Transverse colon (tissue), 4 donors: ENCODE measurements at regions of chr3 and their contacts with region 1.

Region 1: GRCh38 chr3:120742198-120742849 is at the starts of genes GTF2E1 and RABL3:
- DNase-seq: peak; percentile 98
- H3K4me3 ChIP-seq: peak within 1 kb of the TSS; percentile 71 to 91 (median 83)
- H3K27ac ChIP-seq: peak within 1 kb of the TSS; percentile 90 to 98 (median 94)
- H3K4me1 ChIP-seq: peaks cover 11 to 20% (median 17%) of the 10 kb centered on the region in 4 donors
- H3K27me3 ChIP-seq: no peaks in the 10 kb centered on the region
- CTCF ChIP-seq: no peak
- EP300 ChIP-seq: no peak
- POLR2A ChIP-seq: peak; percentile 86
- total RNA-seq, gene GTF2E1: 9.0 to 32.4 (median 14.5) TPM
- total RNA-seq, gene RABL3: 8.2 to 23.7 (median 19.9) TPM

Region 2: DNA sequence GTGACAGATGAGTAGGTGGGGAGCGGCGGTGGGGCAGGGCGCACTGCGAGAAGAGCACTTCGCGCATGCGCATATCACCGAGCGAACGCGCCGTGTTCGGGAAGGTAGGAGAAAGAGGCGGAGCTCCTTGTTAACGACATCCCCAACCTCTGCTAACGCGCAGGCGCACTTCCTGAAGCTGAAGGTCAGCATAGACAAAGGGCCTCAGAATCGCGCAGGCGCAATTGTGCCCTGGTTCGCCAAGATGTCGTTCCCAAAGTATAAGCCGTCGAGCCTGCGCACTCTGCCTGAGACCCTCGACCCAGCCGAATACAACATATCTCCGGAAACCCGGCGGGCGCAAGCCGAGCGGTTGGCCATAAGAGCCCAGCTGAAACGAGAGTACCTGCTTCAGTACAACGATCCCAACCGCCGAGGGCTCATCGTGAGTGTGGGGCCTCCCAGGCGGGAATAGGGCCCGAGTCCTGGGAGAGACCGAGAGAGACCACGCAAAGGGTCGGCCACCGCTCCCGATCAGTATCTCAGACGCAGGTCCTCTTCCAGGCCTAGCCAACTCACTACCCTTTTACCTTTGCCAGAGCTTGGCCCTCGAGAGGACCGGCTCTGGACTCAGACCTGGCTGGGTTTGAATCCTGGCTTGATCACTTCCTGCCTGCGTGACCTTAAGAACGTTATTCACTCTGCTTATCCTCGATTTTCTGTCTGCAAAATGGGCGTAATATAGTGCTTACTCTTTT is 146.0 kb before region 1 on chr3 and contains the start of gene NDUFB4:
- in situ Hi-C with region 1: loop called in 1 of 4 experiments (anchors 25 kb)
- intact Hi-C with region 1: no loop called
- DNase-seq: peak; percentile 97
- H3K4me3 ChIP-seq: peak within 1 kb of the TSS; percentile 68 to 80 (median 74)
- H3K27ac ChIP-seq: peak within 1 kb of the TSS; percentile 91 to 94 (median 92)
- H3K4me1 ChIP-seq: peaks cover 9 to 44% (median 29%) of the 10 kb centered on the region in 4 donors
- H3K27me3 ChIP-seq: no peaks in the 10 kb centered on the region
- CTCF ChIP-seq: no peak
- EP300 ChIP-seq: no peak
- POLR2A ChIP-seq: peak; percentile 89
- total RNA-seq, gene NDUFB4: 9.6 to 129 (median 63.7) TPM

Region 3: DNA sequence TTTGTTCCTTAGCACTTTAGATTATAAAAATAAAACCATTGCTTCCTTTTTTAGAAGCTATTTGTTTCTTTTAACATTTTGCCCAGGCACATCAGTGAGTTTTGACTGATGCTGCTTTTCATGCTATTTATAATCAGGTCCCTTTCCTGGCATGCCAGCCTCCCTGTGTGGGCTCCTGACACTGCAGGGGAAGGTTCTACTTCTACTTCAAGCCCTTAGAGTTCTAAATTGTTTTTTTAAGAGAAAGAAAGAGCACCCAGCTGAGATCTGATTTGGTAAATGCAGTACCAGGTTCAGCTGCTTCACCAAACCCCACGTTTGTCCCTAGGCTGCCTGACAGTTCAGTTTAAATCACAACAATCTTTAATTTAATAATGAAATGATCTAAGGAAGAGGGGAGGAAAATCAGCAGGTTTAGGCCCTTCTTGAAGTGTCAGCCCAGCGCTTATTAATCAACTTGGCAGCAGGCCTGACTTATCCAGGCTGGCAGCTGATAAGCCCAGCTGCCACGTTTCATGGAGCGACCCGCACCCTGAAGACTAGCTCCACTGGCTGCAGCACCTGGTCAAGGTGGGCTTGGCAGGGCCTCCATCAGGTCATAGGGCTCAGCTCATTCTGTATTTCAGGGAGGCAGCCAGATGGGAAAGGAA is 89.3 kb before region 1 on chr3:
- in situ Hi-C with region 1: no loop called
- intact Hi-C with region 1: no loop called
- DNase-seq: no peak
- H3K4me3 ChIP-seq: no peak overlapping the region
- H3K27ac ChIP-seq: no peak overlapping the region
- H3K4me1 ChIP-seq: no peaks in the 10 kb centered on the region
- H3K27me3 ChIP-seq: no peaks in the 10 kb centered on the region
- CTCF ChIP-seq: no peak
- EP300 ChIP-seq: no peak
- POLR2A ChIP-seq: no peak